Psoas muscle (tissue), 8 donors: ENCODE measurements at regions of chr11 and their contacts with region 1.

Region 1: GRCh38 chr11:103682318-103683184 is 353.9 kb upstream of the DDI1 start:
- DNase-seq: peak in 1 of 2 donors; percentile 37
- ATAC-seq: peak; percentile 64 to 89 (median 77)
- H3K4me3 ChIP-seq: no peak overlapping the region
- H3K27ac ChIP-seq: no peak overlapping the region
- H3K4me1 ChIP-seq: no peaks in the 10 kb centered on the region
- H3K27me3 ChIP-seq: no peaks in the 10 kb centered on the region
- CTCF ChIP-seq: peak; percentile 69

Region 2: DNA sequence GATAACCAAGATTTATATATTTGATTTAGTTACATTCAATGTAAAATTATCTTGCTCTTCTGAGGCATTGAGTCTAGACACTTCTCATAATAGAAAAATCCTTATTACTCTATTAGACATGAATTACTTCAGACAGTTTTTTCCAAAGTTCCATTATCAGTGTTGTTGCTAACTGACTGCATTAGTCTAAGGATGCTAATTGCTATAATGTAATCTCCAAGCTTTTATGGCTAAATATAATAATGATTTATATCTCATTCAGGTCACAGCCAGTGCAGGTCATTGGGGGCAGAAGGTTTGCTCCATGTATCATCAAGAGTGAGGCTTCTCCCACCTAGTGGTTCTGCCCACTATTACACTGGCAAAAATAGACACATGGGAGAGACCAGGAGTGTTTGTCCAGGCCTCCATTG is 23.3 kb before region 1 on chr11:
- intact Hi-C with region 1: no loop called
- DNase-seq: no peak
- ATAC-seq: no peak
- H3K4me3 ChIP-seq: no peak overlapping the region
- H3K27ac ChIP-seq: no peak overlapping the region
- H3K4me1 ChIP-seq: no peaks in the 10 kb centered on the region
- H3K27me3 ChIP-seq: no peaks in the 10 kb centered on the region
- CTCF ChIP-seq: no peak

Region 3: DNA sequence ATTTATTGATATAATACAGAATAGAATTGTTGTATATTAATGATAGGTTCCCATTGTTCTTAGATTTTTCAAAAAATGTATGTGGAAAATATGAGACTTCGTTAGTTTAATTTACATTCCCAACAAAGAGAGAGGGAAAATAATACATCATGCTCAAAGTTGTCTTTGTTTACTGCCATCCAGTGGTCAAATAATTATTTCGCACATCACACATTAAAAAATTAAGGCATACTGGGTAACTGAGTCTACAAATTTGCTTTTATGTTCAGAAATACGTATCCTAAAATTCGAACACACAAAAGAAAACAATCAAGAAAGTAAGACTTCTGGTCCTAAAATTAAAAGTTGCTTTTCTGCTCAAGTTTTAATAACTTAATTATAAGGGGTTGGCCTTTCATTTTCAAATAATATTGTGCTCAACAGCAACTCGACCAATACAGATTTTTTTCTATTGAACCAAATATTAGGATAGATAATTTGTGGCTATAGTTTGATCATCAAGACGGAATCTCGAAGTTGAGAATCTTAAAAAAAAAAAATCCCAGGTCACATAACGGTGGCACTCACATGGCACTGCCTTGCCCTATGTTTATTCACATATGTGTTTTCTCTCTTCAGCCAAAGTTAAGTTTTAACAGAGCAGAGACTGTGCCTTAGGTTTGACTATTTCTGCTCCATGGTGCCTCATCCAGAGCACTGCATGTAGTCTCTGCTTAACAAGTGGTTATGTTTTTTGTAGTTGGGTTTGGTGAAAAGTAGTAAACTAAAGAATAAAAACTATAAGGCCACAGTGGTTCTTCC is 469.1 kb after region 1 on chr11:
- intact Hi-C with region 1: loop called in 1 of 2 experiments (anchors 5 kb)
- DNase-seq: no peak
- ATAC-seq: no peak
- H3K4me3 ChIP-seq: no peak overlapping the region
- H3K27ac ChIP-seq: no peak overlapping the region
- H3K4me1 ChIP-seq: no peaks in the 10 kb centered on the region
- H3K27me3 ChIP-seq: no peaks in the 10 kb centered on the region
- CTCF ChIP-seq: no peak